ENCODE measurements at regions of chr4 and their contacts with region 1.

Region 1: GRCh38 chr4:12712648-12713339 is 771.3 kb downstream of the RAB28 start:
- DNase-seq: no peak
- ATAC-seq: no peak
- H3K4me3 ChIP-seq: no peak overlapping the region
- H3K27ac ChIP-seq: no peak overlapping the region
- H3K4me1 ChIP-seq: no peaks in the 10 kb centered on the region
- H3K27me3 ChIP-seq: no peaks in the 10 kb centered on the region
- CTCF ChIP-seq: no peak

Region 2: DNA sequence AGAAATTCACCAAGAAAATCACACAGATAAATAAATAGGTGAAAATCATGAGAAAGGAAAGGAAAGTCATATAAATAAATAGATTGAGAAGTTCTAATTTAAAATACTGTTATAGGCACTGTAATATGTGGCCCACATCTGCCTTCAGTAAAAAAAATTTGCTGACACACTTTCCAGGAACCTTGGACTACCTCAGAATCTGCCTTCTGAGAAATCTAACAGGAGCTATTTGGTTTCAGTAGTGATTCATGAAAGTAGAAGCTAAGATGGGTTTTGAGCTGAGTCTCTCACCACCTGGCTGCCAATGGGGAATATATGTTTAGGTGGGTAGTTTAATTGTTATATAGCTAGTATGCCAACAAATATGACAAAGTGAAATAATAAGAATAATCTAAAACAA is 38.6 kb before region 1 on chr4:
- intact Hi-C with region 1: loop called in 1 of 10 experiments (anchors 5 kb)
- DNase-seq: no peak
- ATAC-seq: no peak
- H3K4me3 ChIP-seq: no peak overlapping the region
- H3K27ac ChIP-seq: no peak overlapping the region
- H3K4me1 ChIP-seq: no peaks in the 10 kb centered on the region
- H3K27me3 ChIP-seq: no peaks in the 10 kb centered on the region
- CTCF ChIP-seq: no peak

Measured in heart right ventricle (tissue), 16 donors.